ENCODE measurements at regions of chr7 and their contacts with region 1.

Region 1: GRCh38 chr7:55255496-55256435 is 109.4 kb upstream of the LANCL2 start:
- DNase-seq: peak; percentile 81 to 96
- H3K4me3 ChIP-seq: peak overlapping the region; percentile 64
- H3K27ac ChIP-seq: no peak overlapping the region
- H3K4me1 ChIP-seq: peaks cover 5% of the 10 kb centered on the region
- H3K27me3 ChIP-seq: no peaks in the 10 kb centered on the region
- CTCF ChIP-seq: peak; percentile 99

Region 2: DNA sequence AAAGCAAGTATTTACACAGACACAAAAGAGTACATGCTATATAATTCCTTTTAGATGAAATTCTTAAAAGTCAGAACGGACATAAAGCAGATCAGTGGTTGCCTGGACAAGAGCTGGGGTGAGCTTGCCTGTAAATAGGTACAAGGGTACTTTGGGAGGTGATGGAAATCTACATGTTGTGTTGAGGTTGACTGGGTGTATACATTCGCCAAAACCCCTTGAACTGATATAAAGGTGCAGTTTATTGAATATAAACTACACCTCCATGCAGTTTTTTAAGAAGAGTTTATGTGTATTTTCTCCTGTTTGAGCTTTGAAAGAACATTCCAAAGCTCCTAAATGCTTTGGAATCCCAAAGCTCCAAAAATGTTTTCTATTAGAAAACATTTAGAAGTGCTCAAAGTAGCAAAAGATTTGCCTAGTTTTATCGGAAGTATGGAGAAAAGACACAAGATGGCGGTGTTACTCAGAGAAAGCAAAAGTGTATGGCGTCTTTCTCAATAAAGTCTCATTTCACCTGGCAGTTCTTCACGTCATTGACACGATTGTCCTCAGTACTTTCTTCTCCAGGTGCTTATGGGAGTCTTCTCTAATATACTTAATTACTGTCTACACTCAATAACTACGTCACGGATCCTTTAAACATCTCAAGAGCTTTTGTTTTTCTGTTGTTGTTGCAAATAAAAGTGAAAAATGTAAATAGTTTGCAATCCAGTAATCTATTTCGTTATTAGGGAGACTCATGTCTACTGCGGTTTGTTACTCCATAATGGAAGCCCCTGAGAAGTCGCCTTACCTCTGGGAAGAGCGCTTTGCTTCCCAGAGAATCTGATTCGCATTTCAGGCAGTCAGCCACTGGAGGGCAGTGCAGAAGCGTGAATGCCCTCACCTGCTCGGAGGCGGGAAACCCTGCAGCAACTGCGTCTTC is 482.0 kb before region 1 on chr7:
- CTCF ChIA-PET with region 1: interaction called, 26 read pairs
- POLR2A ChIA-PET with region 1: no interaction called
- intact Hi-C with region 1: loop called (anchors 1 kb)
- DNase-seq: peak; percentile 94
- H3K4me3 ChIP-seq: peak overlapping the region; percentile 58
- H3K27ac ChIP-seq: peak overlapping the region; percentile 67
- H3K4me1 ChIP-seq: peaks cover 20% of the 10 kb centered on the region
- H3K27me3 ChIP-seq: no peaks in the 10 kb centered on the region
- CTCF ChIP-seq: peak; percentile 100

Region 3: GRCh38 chr7:54831644-54832099 is 424.1 kb before region 1 on chr7:
- CTCF ChIA-PET with region 1: interaction called, 10 read pairs
- POLR2A ChIA-PET with region 1: no interaction called
- intact Hi-C with region 1: loop called (anchors 2 kb)
- DNase-seq: peak; percentile 86 to 100
- H3K4me3 ChIP-seq: peak overlapping the region; percentile 39; the same call in 1 of the 2 replicates
- H3K27ac ChIP-seq: peak overlapping the region; percentile 94
- H3K4me1 ChIP-seq: peaks cover 45% of the 10 kb centered on the region
- H3K27me3 ChIP-seq: no peaks in the 10 kb centered on the region
- CTCF ChIP-seq: no peak; the same call in none of the 2 replicates

Region 4: GRCh38 chr7:54877683-54878082 is 378.1 kb before region 1 on chr7:
- CTCF ChIA-PET with region 1: interaction called, 6 read pairs
- POLR2A ChIA-PET with region 1: no interaction called
- intact Hi-C with region 1: loop called (anchors 1 kb)
- DNase-seq: peak; percentile 35 to 73
- H3K4me3 ChIP-seq: no peak overlapping the region
- H3K27ac ChIP-seq: no peak overlapping the region
- H3K4me1 ChIP-seq: peaks cover 8% of the 10 kb centered on the region
- H3K27me3 ChIP-seq: no peaks in the 10 kb centered on the region
- CTCF ChIP-seq: peak; percentile 67

Region 5: DNA sequence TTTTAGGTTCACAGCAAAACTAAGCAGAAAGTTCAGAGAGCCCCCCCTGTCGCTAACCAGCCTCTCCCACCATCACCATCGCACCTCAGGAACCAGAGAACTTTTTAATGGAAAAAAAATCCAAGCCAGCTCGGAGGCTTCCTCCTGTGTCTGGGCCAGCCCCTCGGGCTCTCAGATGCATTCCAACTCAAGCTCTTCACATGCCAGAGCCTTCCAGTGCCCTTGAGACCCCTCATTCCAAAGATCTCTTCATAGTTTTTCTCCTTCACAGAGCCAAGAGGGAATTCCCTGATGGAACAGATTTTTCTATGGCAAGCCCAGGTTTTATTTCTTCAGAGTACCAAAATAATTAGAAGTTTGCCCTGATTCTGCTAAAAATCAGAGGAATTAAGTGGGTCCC is 44.0 kb before region 1 on chr7:
- CTCF ChIA-PET with region 1: interaction called, 5 read pairs
- POLR2A ChIA-PET with region 1: interaction called, 3 read pairs
- intact Hi-C with region 1: loop called (anchors 2 kb)
- DNase-seq: no peak
- H3K4me3 ChIP-seq: no peak overlapping the region
- H3K27ac ChIP-seq: no peak overlapping the region
- H3K4me1 ChIP-seq: peaks cover 14% of the 10 kb centered on the region
- H3K27me3 ChIP-seq: no peaks in the 10 kb centered on the region
- CTCF ChIP-seq: no peak

Region 6: GRCh38 chr7:55314962-55315685 is 59.4 kb after region 1 on chr7:
- CTCF ChIA-PET with region 1: no interaction called
- POLR2A ChIA-PET with region 1: no interaction called
- intact Hi-C with region 1: no loop called
- DNase-seq: no peak
- H3K4me3 ChIP-seq: no peak overlapping the region
- H3K27ac ChIP-seq: no peak overlapping the region
- H3K4me1 ChIP-seq: no peaks in the 10 kb centered on the region
- H3K27me3 ChIP-seq: peaks cover 82% of the 10 kb centered on the region
- CTCF ChIP-seq: no peak

Measured in PC-9 (cell line).